ENCODE measurements at regions of chr3 and their contacts with region 1.

Region 1: DNA sequence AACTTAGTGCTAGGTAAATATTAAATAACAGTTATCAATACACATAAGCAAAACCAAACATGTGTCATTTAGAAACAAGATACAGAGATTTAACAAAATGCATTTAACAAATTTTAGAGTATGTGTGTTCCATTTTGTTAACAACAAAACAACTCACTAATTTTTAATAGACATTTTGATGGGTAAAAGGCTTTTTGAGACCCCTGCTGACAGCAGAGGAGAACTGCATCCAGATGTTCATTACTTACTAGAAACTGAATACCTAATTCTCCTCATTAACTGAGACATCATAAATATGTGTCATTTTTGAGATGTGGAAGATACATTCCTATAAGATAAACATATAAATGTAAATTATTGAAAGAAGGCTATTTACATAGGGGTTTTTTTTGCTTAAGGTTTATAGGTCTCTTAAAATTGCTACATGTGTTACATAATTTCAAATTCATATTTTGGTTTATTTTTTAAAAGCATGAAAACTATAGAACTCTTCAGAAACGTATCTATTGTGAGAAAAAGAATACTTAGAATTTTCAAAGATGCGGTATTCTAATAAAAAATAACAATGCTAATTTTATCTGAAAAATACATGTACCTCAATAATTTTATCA is 1009.8 kb downstream of the TUSC7 start:
- DNase-seq: no peak
- H3K4me3 ChIP-seq: no peak overlapping the region
- H3K27ac ChIP-seq: no peak overlapping the region
- H3K27me3 ChIP-seq: no peaks in the 10 kb centered on the region
- CTCF ChIP-seq: peak; percentile 85

Region 2: GRCh38 chr3:117526470-117527079 is 192.8 kb before region 1 on chr3:
- CTCF ChIA-PET with region 1: interaction called, 10 read pairs
- POLR2A ChIA-PET with region 1: no interaction called
- DNase-seq: no peak
- H3K4me3 ChIP-seq: no peak overlapping the region
- H3K27ac ChIP-seq: no peak overlapping the region
- H3K27me3 ChIP-seq: no peaks in the 10 kb centered on the region
- CTCF ChIP-seq: peak; percentile 70

Region 3: DNA sequence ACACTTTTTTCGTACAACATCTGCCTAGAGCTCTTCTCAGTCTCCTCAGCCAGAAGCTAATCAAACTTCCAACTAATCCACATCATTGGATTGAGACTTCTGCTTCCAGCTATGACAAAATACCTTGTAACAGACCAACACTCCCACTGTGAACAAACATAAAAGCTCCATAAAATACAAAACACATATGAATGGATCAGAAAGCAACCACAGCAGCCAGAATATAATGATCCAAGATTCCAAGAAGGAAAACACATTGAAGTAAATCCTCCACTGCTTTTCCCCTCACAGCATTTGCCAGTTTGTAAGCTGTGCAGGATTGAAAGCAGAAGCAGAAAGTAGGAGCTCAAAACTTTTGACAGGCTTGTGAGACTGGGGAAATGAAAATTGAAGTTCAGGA is 146.6 kb before region 1 on chr3:
- CTCF ChIA-PET with region 1: no interaction called
- POLR2A ChIA-PET with region 1: no interaction called
- DNase-seq: no peak
- H3K4me3 ChIP-seq: no peak overlapping the region
- H3K27ac ChIP-seq: no peak overlapping the region
- H3K27me3 ChIP-seq: no peaks in the 10 kb centered on the region
- CTCF ChIP-seq: no peak

Measured in AG04450 (cell line).